CD8-positive, alpha-beta memory T cell (primary cell): ENCODE measurements at regions of chr6 and their contacts with region 1.

Region 1: DNA sequence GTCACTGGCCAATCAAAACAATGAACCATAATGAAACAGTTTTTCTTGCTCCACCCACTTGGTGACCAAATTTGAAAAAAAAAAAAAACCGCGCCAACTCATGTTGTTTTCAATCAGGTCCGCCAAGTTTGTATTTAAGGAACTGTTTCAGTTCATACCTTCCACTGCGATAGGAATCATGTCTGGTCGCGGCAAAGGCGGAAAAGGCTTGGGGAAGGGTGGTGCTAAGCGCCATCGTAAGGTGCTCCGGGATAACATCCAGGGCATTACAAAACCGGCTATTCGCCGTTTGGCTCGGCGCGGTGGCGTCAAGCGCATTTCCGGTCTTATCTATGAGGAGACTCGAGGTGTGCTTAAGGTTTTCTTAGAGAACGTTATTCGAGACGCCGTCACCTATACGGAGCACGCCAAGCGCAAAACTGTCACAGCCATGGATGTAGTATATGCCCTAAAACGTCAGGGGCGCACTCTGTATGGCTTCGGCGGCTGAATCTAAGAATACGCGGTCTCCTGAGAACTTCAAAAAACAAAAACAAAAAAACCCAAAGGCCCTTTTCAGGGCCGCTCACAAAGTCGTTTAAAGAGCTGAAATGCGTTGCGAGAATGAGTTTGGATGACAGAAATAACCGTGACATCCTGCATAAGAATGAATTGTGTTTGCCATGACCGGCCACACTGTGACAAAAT is 16.7 kb downstream of the HFE start:
- DNase-seq: peak; percentile 75 to 96 (median 93)
- H3K4me3 ChIP-seq: peak overlapping the region; percentile 51
- H3K4me3 Mint-ChIP-seq: peak overlapping the region; percentile 83 to 92 (median 87)
- H3K27ac ChIP-seq: peak overlapping the region; percentile 82
- H3K27ac Mint-ChIP-seq: peak overlapping the region; percentile 96 to 98 (median 97)
- H3K4me1 ChIP-seq: peaks cover 18% of the 10 kb centered on the region
- H3K4me1 Mint-ChIP-seq: peaks cover 16 to 20% (median 17%) of the 10 kb centered on the region in 3 donors
- H3K27me3 ChIP-seq: no peaks in the 10 kb centered on the region
- H3K27me3 Mint-ChIP-seq: peaks cover 0 to 4% of the 10 kb centered on the region in 2 donors

Region 2: DNA sequence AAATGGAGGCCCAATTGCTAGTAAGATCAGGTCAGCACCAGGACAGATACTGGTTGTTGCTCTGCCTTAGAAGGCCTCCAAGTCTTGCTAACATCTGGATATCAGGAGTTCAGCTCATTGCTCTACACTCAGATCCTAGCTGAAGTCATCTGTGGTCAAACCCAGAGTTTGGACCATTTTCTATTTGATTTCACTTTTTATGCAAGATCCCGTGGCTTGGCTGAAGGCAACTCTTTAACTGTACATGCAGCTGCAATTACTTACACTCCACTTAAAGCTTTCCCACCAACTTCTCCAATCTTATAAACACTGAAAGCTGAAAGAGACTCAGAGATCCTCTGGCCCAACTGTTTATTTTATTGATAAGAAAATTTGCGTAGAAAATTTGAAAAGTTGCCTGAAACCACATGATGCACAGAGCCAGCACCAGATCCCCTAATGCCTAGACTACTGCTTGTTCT is 176.1 kb before region 1 on chr6:
- CTCF ChIA-PET with region 1: no interaction called
- POLR2A ChIA-PET with region 1: no interaction called
- DNase-seq: no peak
- H3K4me3 ChIP-seq: no peak overlapping the region
- H3K4me3 Mint-ChIP-seq: no peak overlapping the region
- H3K27ac ChIP-seq: no peak overlapping the region
- H3K27ac Mint-ChIP-seq: no peak overlapping the region
- H3K4me1 ChIP-seq: no peaks in the 10 kb centered on the region
- H3K4me1 Mint-ChIP-seq: no peaks in the 10 kb centered on the region
- H3K27me3 ChIP-seq: no peaks in the 10 kb centered on the region
- H3K27me3 Mint-ChIP-seq: peaks cover 0 to 11% of the 10 kb centered on the region in 2 donors

Region 3: GRCh38 chr6:26025894-26026832 is 77.8 kb before region 1 on chr6:
- CTCF ChIA-PET with region 1: interaction called, 4 read pairs
- POLR2A ChIA-PET with region 1: interaction called, 26 read pairs
- DNase-seq: peak; percentile 86 to 95 (median 94)
- H3K4me3 ChIP-seq: peak overlapping the region; percentile 59
- H3K4me3 Mint-ChIP-seq: peak overlapping the region; percentile 85 to 95 (median 93)
- H3K27ac ChIP-seq: peak overlapping the region; percentile 86
- H3K27ac Mint-ChIP-seq: peak overlapping the region; percentile 93 to 100 (median 98)
- H3K4me1 ChIP-seq: peaks cover 21% of the 10 kb centered on the region
- H3K4me1 Mint-ChIP-seq: peaks cover 30 to 77% (median 55%) of the 10 kb centered on the region in 3 donors
- H3K27me3 ChIP-seq: no peaks in the 10 kb centered on the region
- H3K27me3 Mint-ChIP-seq: peaks cover 0 to 9% of the 10 kb centered on the region in 2 donors

Region 4: DNA sequence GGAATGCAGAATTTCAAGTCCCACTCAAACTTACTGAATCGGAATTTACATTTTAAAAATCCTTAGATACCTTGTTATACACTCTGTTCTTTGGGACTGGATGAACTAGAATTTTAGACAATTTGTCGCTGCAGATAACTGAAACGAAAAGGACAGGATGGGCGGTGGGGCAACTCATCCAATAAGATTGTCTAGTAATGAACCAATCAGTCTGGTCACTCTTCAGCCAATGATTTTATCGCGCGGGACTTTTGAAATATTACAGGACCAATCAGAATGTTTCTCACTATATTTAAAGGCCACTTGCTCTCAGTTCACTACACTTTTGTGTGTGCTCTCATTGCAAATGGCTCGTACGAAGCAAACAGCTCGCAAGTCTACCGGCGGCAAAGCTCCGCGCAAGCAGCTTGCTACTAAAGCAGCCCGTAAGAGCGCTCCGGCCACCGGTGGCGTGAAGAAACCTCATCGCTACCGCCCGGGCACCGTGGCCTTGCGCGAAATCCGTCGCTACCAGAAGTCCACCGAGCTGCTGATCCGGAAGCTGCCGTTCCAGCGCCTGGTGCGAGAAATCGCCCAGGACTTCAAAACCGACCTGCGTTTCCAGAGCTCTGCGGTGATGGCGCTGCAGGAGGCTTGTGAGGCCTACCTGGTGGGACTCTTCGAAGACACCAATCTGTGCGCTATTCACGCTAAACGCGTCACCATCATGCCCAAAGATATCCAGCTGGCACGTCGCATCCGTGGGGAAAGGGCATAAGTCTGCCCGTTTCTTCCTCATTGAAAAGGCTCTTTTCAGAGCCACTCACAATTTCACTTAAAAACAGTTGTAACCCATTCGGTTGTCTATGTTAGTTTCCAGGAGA is 58.6 kb before region 1 on chr6:
- CTCF ChIA-PET with region 1: interaction called, 6 read pairs
- POLR2A ChIA-PET with region 1: interaction called, 47 read pairs
- DNase-seq: peak; percentile 58 to 90 (median 85)
- H3K4me3 ChIP-seq: peak overlapping the region; percentile 77
- H3K4me3 Mint-ChIP-seq: peak overlapping the region; percentile 87 to 94 (median 92)
- H3K27ac ChIP-seq: peak overlapping the region; percentile 71
- H3K27ac Mint-ChIP-seq: peak overlapping the region; percentile 94 to 99 (median 98)
- H3K4me1 ChIP-seq: peaks cover 10% of the 10 kb centered on the region
- H3K4me1 Mint-ChIP-seq: peaks cover 20 to 32% (median 30%) of the 10 kb centered on the region in 3 donors
- H3K27me3 ChIP-seq: no peaks in the 10 kb centered on the region
- H3K27me3 Mint-ChIP-seq: no peaks in the 10 kb centered on the region

Region 5: GRCh38 chr6:26065952-26066380 is 37.9 kb before region 1 on chr6:
- CTCF ChIA-PET with region 1: interaction called, 375 read pairs
- POLR2A ChIA-PET with region 1: interaction called, 4 read pairs
- DNase-seq: peak in 4 of 5 donors; percentile 32 to 67 (median 62)
- H3K4me3 ChIP-seq: no peak overlapping the region
- H3K4me3 Mint-ChIP-seq: no peak overlapping the region
- H3K27ac ChIP-seq: no peak overlapping the region
- H3K27ac Mint-ChIP-seq: no peak overlapping the region
- H3K4me1 ChIP-seq: no peaks in the 10 kb centered on the region
- H3K4me1 Mint-ChIP-seq: peaks cover 4 to 11% (median 6%) of the 10 kb centered on the region in 3 donors
- H3K27me3 ChIP-seq: no peaks in the 10 kb centered on the region
- H3K27me3 Mint-ChIP-seq: no peaks in the 10 kb centered on the region

Region 6: DNA sequence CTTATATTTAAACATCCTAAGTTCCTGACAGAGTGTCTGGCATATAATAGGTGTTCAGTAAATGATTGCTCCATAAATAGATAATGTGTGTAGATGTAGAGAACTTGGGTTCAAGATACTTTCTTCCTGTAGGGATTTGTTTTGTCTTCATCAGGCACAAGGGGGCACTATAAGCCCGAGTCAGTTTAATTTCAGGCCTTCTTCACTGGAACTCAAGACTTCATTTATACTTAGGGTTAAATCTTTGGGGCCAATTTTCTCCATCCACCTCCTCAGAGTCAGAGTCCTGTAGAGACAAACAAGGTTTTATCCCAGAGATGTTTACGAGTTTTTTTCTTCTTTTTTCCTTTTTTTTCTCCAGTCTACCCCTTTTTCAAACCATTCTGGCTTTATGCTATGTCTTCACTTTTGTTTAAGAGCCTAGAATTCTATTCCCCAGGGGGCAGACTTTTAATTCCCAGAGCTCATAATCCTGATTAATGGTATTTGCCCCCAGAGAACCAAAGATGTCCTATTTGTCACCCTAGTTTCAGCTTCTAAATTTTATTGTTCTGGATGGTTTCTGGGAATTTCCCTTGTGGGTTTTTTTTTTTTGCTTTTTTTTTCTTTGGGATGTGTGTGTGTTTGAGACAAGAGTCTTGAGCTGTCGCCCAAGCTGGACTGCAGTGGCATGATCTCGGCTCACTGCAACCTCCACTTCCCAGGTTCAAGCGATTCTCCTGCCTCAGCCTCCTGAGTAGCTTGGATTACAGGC is 71.7 kb after region 1 on chr6:
- CTCF ChIA-PET with region 1: no interaction called
- POLR2A ChIA-PET with region 1: interaction called, 15 read pairs
- DNase-seq: peak; percentile 8 to 63 (median 52)
- H3K4me3 ChIP-seq: no peak overlapping the region
- H3K4me3 Mint-ChIP-seq: peak overlapping the region in 2 of 7 donors; percentile 21 to 75
- H3K27ac ChIP-seq: no peak overlapping the region
- H3K27ac Mint-ChIP-seq: peak overlapping the region; percentile 8 to 89 (median 78)
- H3K4me1 ChIP-seq: peaks cover 36% of the 10 kb centered on the region
- H3K4me1 Mint-ChIP-seq: peaks cover 30 to 44% (median 40%) of the 10 kb centered on the region in 3 donors
- H3K27me3 ChIP-seq: no peaks in the 10 kb centered on the region
- H3K27me3 Mint-ChIP-seq: peaks cover 0 to 3% of the 10 kb centered on the region in 2 donors

Region 7: GRCh38 chr6:26234421-26235296 is 130.7 kb after region 1 on chr6:
- CTCF ChIA-PET with region 1: no interaction called
- POLR2A ChIA-PET with region 1: interaction called, 12 read pairs
- DNase-seq: peak; percentile 38 to 84 (median 76)
- H3K4me3 ChIP-seq: peak overlapping the region; percentile 94
- H3K4me3 Mint-ChIP-seq: peak overlapping the region; percentile 87 to 95 (median 91)
- H3K27ac ChIP-seq: peak overlapping the region; percentile 88
- H3K27ac Mint-ChIP-seq: peak overlapping the region; percentile 87 to 98 (median 96)
- H3K4me1 ChIP-seq: peaks cover 19% of the 10 kb centered on the region
- H3K4me1 Mint-ChIP-seq: peaks cover 28 to 35% (median 35%) of the 10 kb centered on the region in 3 donors
- H3K27me3 ChIP-seq: no peaks in the 10 kb centered on the region
- H3K27me3 Mint-ChIP-seq: peaks cover 0 to 5% of the 10 kb centered on the region in 2 donors

Region 8: DNA sequence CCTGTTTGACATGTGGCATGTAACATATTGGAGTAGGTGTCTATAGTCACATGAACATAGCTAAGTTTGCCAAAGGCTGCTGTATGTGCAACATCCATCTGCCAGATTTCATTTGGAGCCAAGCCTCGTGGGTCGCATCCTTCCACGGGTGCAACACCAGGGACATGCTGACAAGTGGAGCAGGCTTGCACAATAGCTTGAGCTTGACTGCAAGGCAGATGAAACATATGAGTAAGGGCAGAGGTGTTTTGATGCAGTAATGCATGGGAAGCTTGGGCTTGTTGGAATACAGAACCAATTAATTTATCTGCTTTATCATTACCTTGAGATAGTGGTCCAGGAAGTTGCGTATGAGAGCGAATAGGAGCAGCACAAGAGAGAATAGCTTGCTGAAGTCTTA is 187.0 kb after region 1 on chr6:
- CTCF ChIA-PET with region 1: no interaction called
- POLR2A ChIA-PET with region 1: no interaction called
- DNase-seq: no peak
- H3K4me3 ChIP-seq: no peak overlapping the region
- H3K4me3 Mint-ChIP-seq: peak overlapping the region in 1 of 7 donors; percentile 38
- H3K27ac ChIP-seq: no peak overlapping the region
- H3K27ac Mint-ChIP-seq: peak overlapping the region in 1 of 8 donors; percentile 5
- H3K4me1 ChIP-seq: no peaks in the 10 kb centered on the region
- H3K4me1 Mint-ChIP-seq: peaks cover 7 to 14% (median 9%) of the 10 kb centered on the region in 3 donors
- H3K27me3 ChIP-seq: no peaks in the 10 kb centered on the region
- H3K27me3 Mint-ChIP-seq: peaks cover 0 to 7% of the 10 kb centered on the region in 2 donors

Region 9: DNA sequence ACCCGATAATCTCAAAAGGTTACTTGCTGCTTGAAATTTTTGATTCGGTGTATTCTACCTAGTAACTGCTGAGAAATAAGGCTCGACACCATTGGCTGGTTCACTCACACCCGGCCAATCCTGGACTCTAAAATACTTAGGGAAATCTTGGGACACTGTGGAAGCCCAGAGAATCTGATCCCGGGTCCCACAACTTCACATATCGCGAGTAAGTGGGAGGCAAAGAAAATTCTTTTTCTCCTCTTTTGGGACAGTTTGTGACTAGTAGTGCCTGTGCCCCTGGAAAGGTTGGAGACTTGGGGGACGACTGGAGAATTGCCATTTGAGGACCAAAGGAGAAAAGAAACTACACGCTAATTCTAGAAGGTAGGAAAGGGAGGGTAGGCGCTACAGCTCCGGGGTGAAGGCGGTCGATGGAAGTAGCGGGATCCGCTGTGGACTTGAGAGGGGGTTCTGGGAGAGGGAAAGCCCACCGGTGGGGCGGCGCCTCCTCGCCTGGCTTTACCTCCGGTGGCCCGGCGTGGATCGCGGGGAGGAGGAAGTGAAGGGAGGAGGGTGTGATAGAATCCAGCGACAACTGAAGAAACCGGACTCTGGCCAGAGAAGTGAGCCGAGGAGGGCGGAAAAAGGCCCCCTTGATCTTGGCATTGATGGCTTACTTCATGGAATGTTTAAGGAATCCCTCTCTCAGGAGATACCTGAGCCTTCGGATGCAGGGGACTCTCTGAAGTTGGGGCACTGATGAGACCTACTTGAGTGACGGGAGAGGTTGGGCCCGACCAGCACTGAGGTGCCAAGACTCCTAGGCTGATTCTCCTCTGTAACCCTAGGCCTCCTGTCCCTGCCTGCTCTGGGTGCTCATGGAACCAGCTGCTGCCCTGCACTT is 317.6 kb after region 1 on chr6:
- CTCF ChIA-PET with region 1: no interaction called
- POLR2A ChIA-PET with region 1: no interaction called
- DNase-seq: peak; percentile 28 to 71 (median 65)
- H3K4me3 ChIP-seq: peak overlapping the region; percentile 81
- H3K4me3 Mint-ChIP-seq: no peak overlapping the region
- H3K27ac ChIP-seq: peak overlapping the region; percentile 83
- H3K27ac Mint-ChIP-seq: no peak overlapping the region
- H3K4me1 ChIP-seq: peaks cover 12% of the 10 kb centered on the region
- H3K4me1 Mint-ChIP-seq: peaks cover 12 to 32% (median 18%) of the 10 kb centered on the region in 3 donors
- H3K27me3 ChIP-seq: no peaks in the 10 kb centered on the region
- H3K27me3 Mint-ChIP-seq: no peaks in the 10 kb centered on the region